CD4-positive, alpha-beta memory T cell (primary cell): ENCODE measurements at regions of chr1 and their contacts with region 1.

Region 1: DNA sequence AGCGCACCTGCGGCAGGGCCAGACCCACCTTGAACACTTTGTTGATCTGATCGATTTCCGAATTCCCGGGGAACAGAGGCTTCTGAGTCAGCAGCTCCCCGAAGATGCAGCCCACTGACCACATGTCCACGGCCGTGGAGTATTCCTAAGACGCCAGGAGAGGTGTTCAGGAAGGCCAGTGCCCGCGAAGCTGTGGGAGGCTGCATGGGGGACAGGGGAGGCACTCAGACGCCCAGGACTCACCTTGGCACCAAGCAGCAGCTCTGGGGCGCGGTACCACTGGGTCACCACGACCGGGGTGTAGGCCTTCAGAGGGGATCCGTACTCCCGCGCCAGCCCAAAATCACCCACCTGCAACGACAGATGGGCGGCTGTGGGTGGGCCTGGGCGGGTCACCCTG is 11.2 kb upstream of the SLC35E2B start:
- DNase-seq: no peak
- H3K4me3 ChIP-seq: no peak overlapping the region
- H3K4me3 Mint-ChIP-seq: no peak overlapping the region
- H3K27ac ChIP-seq: no peak overlapping the region
- H3K27ac Mint-ChIP-seq: no peak overlapping the region
- H3K4me1 ChIP-seq: no peaks in the 10 kb centered on the region
- H3K4me1 Mint-ChIP-seq: peaks cover 0 to 4% (median 0%) of the 10 kb centered on the region in 4 donors
- H3K27me3 ChIP-seq: no peaks in the 10 kb centered on the region
- H3K27me3 Mint-ChIP-seq: no peaks in the 10 kb centered on the region

Region 2: GRCh38 chr1:1574721-1575537 is 128.9 kb before region 1 on chr1 and contains the start of gene SSU72:
- CTCF ChIA-PET with region 1: no interaction called
- POLR2A ChIA-PET with region 1: no interaction called
- intact Hi-C with region 1: no loop called
- DNase-seq: peak; percentile 91 to 95 (median 94)
- H3K4me3 ChIP-seq: peak within 1 kb of the TSS; percentile 97
- H3K4me3 Mint-ChIP-seq: peak within 1 kb of the TSS; percentile 96 to 99 (median 98)
- H3K27ac ChIP-seq: peak within 1 kb of the TSS; percentile 99
- H3K27ac Mint-ChIP-seq: peak within 1 kb of the TSS; percentile 97 to 100 (median 99)
- H3K4me1 ChIP-seq: peaks cover 43% of the 10 kb centered on the region
- H3K4me1 Mint-ChIP-seq: peaks cover 12 to 38% (median 25%) of the 10 kb centered on the region in 4 donors
- H3K27me3 ChIP-seq: no peaks in the 10 kb centered on the region
- H3K27me3 Mint-ChIP-seq: no peaks in the 10 kb centered on the region
- total RNA-seq, gene SSU72: 128 to 132 TPM

Region 3: DNA sequence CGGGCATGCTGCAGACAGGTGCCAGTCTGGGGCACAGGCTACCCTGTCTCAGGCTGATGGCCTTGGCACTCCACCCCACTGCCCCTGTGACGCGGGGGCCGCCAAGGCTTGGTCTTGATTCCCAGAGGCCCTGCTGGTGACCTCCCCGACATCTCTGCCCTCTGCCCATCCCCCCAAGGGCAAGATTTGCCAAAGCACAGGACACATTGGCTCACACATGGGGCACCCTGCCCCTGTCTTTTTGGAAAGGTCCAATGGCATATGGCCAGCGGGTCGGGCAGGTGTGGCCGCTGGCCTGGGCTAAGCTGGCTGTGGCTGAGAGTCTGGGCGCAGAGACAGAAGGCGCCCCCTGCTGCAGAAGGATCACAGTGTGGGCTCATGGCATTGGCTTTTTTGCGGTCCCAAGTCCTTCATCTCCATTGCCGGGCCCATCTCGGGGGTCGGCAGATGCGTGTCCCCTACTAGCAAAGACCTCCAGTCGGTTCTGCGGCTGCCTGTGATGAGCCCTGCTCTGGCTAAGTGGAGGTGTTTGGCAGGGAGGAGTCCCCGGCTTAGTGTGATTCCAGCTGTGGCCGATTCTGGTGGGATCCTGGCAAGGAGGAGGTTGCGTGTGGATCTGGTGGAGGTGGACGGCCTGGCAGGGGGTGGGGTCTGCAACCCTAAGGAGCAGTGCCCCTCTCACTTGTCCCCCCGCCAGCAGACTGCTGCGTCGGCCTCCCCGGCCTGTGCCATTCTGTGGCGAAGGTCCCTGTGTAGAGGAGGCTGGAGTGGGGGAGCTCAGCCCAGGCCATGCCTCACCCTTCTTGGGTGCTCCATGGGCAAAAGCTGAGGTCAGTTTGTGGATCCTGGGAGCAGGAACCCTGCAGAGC is 83.6 kb before region 1 on chr1:
- CTCF ChIA-PET with region 1: no interaction called
- POLR2A ChIA-PET with region 1: no interaction called
- intact Hi-C with region 1: no loop called
- DNase-seq: no peak
- H3K4me3 ChIP-seq: no peak overlapping the region
- H3K4me3 Mint-ChIP-seq: no peak overlapping the region
- H3K27ac ChIP-seq: no peak overlapping the region
- H3K27ac Mint-ChIP-seq: no peak overlapping the region
- H3K4me1 ChIP-seq: peaks cover 12% of the 10 kb centered on the region
- H3K4me1 Mint-ChIP-seq: peaks cover 2 to 21% (median 8%) of the 10 kb centered on the region in 4 donors
- H3K27me3 ChIP-seq: no peaks in the 10 kb centered on the region
- H3K27me3 Mint-ChIP-seq: no peaks in the 10 kb centered on the region

Region 4: GRCh38 chr1:1748686-1749321 is 45.0 kb after region 1 on chr1:
- CTCF ChIA-PET with region 1: no interaction called
- POLR2A ChIA-PET with region 1: no interaction called
- intact Hi-C with region 1: loop called (anchors 10 kb)
- DNase-seq: no peak
- H3K4me3 ChIP-seq: no peak overlapping the region
- H3K4me3 Mint-ChIP-seq: peak overlapping the region in 5 of 8 donors; percentile 22 to 45 (median 35)
- H3K27ac ChIP-seq: no peak overlapping the region
- H3K27ac Mint-ChIP-seq: peak overlapping the region in 6 of 7 donors; percentile 20 to 68 (median 58)
- H3K4me1 ChIP-seq: peaks cover 4% of the 10 kb centered on the region
- H3K4me1 Mint-ChIP-seq: peaks cover 0 to 9% (median 3%) of the 10 kb centered on the region in 4 donors
- H3K27me3 ChIP-seq: no peaks in the 10 kb centered on the region
- H3K27me3 Mint-ChIP-seq: no peaks in the 10 kb centered on the region